ENCODE measurements at regions of chr11 and their contacts with region 1.

Region 1: DNA sequence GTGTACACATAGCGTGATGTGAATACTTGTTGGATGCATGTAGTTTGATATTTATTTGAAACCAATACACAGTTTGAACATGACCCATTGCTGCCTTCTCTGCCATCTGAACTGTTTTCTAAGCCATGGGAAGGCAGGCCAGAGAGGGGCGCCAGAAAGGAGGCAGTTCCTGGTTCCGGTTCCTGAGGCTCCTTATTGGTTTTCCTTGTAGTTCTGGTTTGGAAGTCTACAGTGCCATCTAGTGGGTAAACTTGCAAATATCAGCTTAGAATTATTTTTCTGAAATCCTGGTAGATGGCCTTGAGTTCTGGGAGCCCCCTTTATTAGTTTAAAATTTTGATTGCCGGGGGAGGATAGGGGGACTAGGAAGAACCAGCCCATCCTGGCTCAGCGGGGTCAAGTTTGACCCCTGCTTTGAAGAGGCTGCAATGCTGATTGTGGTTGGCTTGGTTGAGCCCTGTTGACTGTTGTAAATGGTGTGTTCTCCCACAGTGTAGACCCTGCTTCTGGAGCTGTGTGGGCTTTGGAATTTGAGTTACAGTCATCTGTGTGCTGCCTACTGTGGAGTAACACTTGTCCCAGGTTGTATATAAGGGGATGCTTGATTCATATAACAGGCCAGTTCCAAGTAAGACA is 48.4 kb downstream of the GRAMD1B start:
- DNase-seq: peak in 4 of 5 donors; percentile 78 to 91 (median 84)
- H3K4me3 ChIP-seq: no peak overlapping the region
- H3K27ac ChIP-seq: no peak overlapping the region
- H3K4me1 ChIP-seq: peaks cover 3 to 18% (median 8%) of the 10 kb centered on the region in 3 donors
- H3K27me3 ChIP-seq: no peaks in the 10 kb centered on the region
- CTCF ChIP-seq: peak; percentile 63

Region 2: GRCh38 chr11:123301696-123302400 is 176.6 kb before region 1 on chr11:
- intact Hi-C with region 1: loop called (anchors 10 kb)
- DNase-seq: peak; percentile 84 to 93 (median 89)
- H3K4me3 ChIP-seq: peak overlapping the region; percentile 46 to 60 (median 53)
- H3K27ac ChIP-seq: no peak overlapping the region
- H3K4me1 ChIP-seq: peaks cover 0 to 8% (median 0%) of the 10 kb centered on the region in 3 donors
- H3K27me3 ChIP-seq: no peaks in the 10 kb centered on the region
- CTCF ChIP-seq: peak; percentile 73

Region 3: DNA sequence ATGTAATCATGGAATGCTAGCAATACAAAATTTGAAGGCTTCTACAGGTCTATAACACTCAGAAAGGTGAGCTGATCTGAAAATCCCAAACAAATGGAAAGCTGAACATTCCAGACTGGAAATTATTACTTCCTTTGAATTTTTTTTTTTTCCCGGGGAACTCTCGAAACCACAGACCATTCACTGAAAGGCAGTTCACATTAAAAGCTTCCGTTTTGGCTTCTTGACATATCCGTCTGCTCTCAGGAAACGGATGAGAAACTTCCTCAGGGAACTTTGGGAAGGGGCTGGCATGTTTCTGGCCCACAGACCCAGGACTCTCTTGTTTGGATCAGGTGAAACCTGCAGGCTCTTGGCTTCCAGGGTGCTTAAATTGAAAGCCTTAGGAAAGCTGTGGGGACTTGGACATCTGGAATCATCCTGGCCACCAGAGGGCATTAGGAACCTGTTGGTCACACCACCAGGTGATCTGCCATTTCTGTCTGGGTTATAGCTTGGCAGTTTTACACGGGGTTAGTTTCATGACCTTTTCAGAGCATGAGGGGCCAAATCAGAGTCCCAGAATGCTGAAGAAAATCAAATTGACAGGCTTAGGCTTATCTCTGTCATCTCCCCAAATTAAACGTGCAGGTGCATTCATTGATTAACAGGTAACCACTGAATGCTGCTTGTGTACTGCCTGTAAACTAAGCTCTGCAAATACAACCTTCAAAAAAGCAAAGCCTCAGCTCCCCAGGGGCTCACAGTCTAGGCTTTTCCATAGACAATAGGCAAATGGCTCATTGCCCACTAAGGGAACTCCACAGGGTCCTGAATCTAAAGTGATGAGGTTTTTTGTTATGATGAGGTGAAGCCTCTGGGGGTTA is 71.1 kb before region 1 on chr11:
- intact Hi-C with region 1: loop called (anchors 10 kb)
- DNase-seq: peak in 4 of 5 donors; percentile 73 to 89 (median 86)
- H3K4me3 ChIP-seq: peak overlapping the region in 1 of 3 donors; percentile 13
- H3K27ac ChIP-seq: no peak overlapping the region
- H3K4me1 ChIP-seq: peaks cover 0 to 3% (median 0%) of the 10 kb centered on the region in 3 donors
- H3K27me3 ChIP-seq: no peaks in the 10 kb centered on the region
- CTCF ChIP-seq: peak; percentile 85

Region 4: GRCh38 chr11:123800036-123800435 is 321.6 kb after region 1 on chr11:
- intact Hi-C with region 1: no loop called
- DNase-seq: no peak
- H3K4me3 ChIP-seq: no peak overlapping the region
- H3K27ac ChIP-seq: no peak overlapping the region
- H3K4me1 ChIP-seq: no peaks in the 10 kb centered on the region
- H3K27me3 ChIP-seq: no peaks in the 10 kb centered on the region
- CTCF ChIP-seq: no peak